GM12878 (cell line): ENCODE measurements at regions of chr18 and their contacts with region 1.

Region 1: DNA sequence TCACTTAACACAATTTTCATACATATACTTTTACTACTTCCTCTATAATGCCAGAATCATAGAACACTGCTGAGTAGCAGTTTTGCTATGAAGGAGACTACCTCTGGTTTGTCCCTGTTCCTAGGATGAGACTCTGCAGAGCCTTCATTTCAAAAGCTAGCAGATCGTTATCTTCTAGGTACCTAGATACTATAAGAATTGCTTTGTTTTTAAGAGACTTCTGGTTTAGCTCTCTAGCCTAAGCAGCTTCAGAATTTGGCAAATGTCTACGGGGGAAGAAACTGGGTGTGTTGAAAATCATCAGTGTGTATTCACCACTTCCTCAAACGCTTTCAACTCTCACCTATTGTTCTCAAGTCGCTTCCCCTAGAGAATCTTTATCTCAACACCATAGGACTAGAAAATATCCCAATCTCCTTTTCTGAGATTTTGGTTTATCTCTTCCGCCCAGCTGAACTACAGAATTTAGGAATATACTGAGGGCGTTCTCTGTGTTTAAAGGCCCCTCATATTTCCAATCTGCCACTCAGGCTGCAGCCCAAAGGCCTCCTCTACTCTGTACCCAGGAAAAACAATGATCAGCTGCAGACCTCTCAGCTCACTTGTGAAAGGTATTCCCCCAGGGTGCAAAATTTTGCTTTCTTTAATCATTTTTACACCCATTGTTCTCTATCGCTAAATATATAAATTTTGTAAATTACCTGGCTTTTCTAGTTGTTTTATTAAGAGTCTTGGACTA is 28.7 kb downstream of the SMAD2 start:
- DNase-seq: peak; percentile 61
- ATAC-seq: peak; percentile 98
- H3K4me3 ChIP-seq: peak overlapping the region; percentile 36
- H3K27ac ChIP-seq: peak overlapping the region; percentile 77
- H3K4me1 ChIP-seq: peaks cover 14% of the 10 kb centered on the region; the same call in 1 of the 2 replicates
- H3K27me3 ChIP-seq: no peaks in the 10 kb centered on the region; a peak in 1 of 4 replicates
- CTCF ChIP-seq: no peak
- EP300 ChIP-seq: no peak; a peak in 1 of 4 replicates
- POLR2A ChIP-seq: no peak
- RAD21 ChIP-seq: no peak

Region 2: DNA sequence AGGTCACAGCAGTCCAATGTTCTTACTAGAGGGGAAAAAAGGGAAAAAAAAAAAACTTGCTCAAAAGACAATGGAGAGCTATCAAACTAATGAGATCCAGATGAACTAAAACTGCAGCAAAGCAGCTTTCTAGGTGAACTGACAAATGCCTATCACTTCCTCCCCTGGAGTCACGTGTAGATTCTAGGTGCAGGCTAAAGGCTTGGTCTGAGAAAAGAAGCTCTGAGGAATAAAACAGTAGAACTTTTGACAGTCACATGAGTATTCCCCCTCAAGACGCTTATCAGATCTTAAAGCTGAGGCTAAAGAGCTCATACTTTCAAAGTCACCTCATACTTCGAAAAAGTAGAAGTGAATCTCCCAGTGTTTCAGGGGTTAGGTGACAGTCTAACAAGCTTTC is 13.6 kb before region 1 on chr18:
- CTCF ChIA-PET with region 1: interaction called, 6 read pairs
- POLR2A ChIA-PET with region 1: interaction called, 7 read pairs
- RAD21 ChIA-PET with region 1: interaction called, 7 read pairs
- SMC1A ChIA-PET with region 1: interaction called, 10 read pairs
- in situ Hi-C with region 1: no loop called
- intact Hi-C with region 1: no loop called
- DNase-seq: no peak
- ATAC-seq: no peak
- H3K4me3 ChIP-seq: no peak overlapping the region
- H3K27ac ChIP-seq: no peak overlapping the region
- H3K4me1 ChIP-seq: peaks cover 6% of the 10 kb centered on the region; the same call in 1 of the 2 replicates
- H3K27me3 ChIP-seq: no peaks in the 10 kb centered on the region
- CTCF ChIP-seq: no peak
- EP300 ChIP-seq: no peak
- POLR2A ChIP-seq: no peak
- RAD21 ChIP-seq: no peak

Region 3: DNA sequence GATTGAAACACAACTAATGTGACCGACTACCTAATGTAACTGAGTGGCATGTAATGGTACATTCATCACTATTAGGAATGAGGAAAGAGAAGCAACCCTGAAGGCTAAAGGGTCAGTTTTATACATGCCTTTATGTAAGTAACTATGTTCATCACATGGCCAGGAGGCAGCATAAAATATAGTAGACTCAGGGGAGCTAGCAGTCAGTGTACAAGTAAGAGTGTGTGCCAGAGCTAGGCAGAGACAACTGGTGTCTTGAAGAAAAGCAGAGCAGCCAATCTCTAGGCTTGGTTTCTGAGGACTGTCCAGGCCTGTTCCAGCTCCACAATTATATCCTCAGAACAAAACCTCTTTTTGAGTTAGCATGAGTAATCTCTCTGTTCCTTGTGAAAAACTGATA is 10.6 kb after region 1 on chr18:
- CTCF ChIA-PET with region 1: interaction called, 5 read pairs
- POLR2A ChIA-PET with region 1: interaction called, 4 read pairs
- RAD21 ChIA-PET with region 1: interaction called, 5 read pairs
- SMC1A ChIA-PET with region 1: interaction called, 8 read pairs
- in situ Hi-C with region 1: no loop called
- intact Hi-C with region 1: loop called (anchors 1 kb)
- DNase-seq: no peak
- ATAC-seq: peak; percentile 74
- H3K4me3 ChIP-seq: no peak overlapping the region
- H3K27ac ChIP-seq: peak overlapping the region; percentile 20
- H3K4me1 ChIP-seq: peaks cover 10% of the 10 kb centered on the region
- H3K27me3 ChIP-seq: no peaks in the 10 kb centered on the region
- CTCF ChIP-seq: no peak
- EP300 ChIP-seq: no peak
- POLR2A ChIP-seq: no peak
- RAD21 ChIP-seq: no peak

Region 4: GRCh38 chr18:47930931-47931717 is 29.3 kb after region 1 on chr18:
- CTCF ChIA-PET with region 1: interaction called, 4 read pairs
- POLR2A ChIA-PET with region 1: interaction called, 11 read pairs
- RAD21 ChIA-PET with region 1: interaction called, 5 read pairs
- SMC1A ChIA-PET with region 1: interaction called, 18 read pairs
- in situ Hi-C with region 1: no loop called
- intact Hi-C with region 1: loop called (anchors 2 kb)
- DNase-seq: peak; percentile 73
- ATAC-seq: peak; percentile 90
- H3K4me3 ChIP-seq: peak overlapping the region; percentile 63; the same call in 1 of the 2 replicates
- H3K27ac ChIP-seq: peak overlapping the region; percentile 86
- H3K4me1 ChIP-seq: no peaks in the 10 kb centered on the region
- H3K27me3 ChIP-seq: no peaks in the 10 kb centered on the region
- CTCF ChIP-seq: no peak
- EP300 ChIP-seq: no peak
- POLR2A ChIP-seq: peak; percentile 83
- RAD21 ChIP-seq: no peak